PC-9 (cell line): ENCODE measurements at regions of chr12 and their contacts with region 1.

Region 1: DNA sequence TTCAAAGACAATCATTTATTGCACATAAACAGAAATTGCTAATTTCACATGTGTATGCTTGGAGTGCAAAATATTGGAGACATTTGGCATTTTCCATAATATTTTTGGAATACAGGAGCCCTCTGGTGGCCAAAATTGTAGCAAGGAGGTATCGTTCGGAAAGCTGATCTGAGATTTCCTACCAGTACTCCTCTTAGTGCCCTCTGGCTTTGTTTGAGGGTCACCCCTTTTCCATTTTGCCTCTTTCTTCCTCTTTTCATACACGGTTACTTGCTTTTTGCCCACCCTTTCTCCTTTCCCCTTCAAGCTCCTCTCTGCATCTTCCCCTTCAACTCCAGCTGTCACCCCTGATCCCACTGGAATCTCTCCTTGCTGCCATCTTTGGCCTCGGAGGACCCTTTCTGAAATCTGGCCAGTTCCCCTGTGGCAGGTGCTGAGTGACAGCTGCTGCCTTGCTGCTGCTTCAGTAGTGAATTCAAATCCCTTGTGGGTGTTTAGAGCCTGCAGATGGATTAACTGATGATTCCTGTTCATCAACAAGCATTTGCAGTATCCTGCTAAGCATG is 164.6 kb upstream of the PARP11 start:
- DNase-seq: no peak
- H3K4me3 ChIP-seq: no peak overlapping the region
- H3K27ac ChIP-seq: no peak overlapping the region
- H3K4me1 ChIP-seq: no peaks in the 10 kb centered on the region
- H3K27me3 ChIP-seq: peaks cover 46% of the 10 kb centered on the region
- CTCF ChIP-seq: peak; percentile 77

Region 2: DNA sequence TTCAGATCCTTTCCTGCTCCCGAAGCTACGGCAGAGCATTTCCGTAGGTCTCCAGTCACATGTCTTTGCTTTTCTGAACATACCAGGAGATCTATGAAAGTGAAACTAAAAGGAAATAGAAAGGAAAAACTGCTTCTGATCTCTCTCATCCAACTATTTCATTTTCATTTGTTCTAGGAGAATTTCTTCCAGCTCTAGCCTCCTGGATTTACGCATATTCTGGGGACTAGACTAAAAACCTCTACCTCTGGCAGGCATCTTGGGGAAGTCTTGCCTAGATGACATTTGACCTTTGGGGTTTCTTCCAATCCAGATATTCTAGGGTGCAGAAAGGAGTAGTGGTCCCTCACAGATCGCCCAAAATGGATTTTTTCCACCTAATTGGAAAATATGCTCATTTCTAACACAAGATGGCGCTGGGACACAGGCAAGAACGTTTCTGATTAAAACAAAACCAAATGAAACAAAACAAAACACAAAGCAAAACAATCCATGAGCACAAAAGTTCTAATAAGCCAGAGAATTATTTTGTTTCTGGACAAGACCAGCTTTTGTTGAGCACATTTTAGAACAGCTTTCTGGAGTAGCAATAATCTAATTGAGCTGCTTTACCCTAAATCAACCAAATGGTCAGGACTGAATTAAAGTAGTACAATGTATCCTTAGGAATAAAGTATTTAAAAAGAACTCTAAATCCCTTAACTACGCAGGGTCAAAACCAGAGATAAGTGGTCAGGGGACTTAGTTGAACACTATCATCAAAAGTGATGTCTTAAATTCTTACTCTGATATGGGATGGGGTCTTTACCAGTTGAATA is 152.3 kb before region 1 on chr12:
- CTCF ChIA-PET with region 1: interaction called, 4 read pairs
- POLR2A ChIA-PET with region 1: no interaction called
- intact Hi-C with region 1: loop called (anchors 1 kb)
- DNase-seq: peak in 1 of 2 experiments; percentile 10
- H3K4me3 ChIP-seq: no peak overlapping the region
- H3K27ac ChIP-seq: no peak overlapping the region
- H3K4me1 ChIP-seq: no peaks in the 10 kb centered on the region
- H3K27me3 ChIP-seq: peaks cover 38% of the 10 kb centered on the region
- CTCF ChIP-seq: peak; percentile 91

Region 3: DNA sequence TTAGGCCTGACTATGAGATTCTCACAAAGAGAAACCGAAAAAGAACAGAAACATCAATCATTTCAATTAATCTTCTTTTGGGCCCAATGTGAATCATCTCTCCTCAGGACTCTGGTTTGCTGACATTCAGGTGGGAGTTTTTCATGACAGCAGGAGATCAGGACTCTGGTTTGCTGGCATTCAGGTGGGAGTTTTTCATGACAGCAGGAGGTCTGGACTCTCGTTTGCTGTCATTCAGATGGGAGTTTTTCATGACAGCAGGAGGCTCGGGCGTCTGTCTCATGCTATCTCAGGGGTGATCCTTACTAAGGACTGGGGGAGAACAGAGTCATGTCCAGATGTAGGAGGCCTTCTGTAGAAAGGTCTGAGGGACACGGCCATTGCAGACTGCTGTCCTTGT is 124.6 kb before region 1 on chr12:
- CTCF ChIA-PET with region 1: no interaction called
- POLR2A ChIA-PET with region 1: no interaction called
- intact Hi-C with region 1: no loop called
- DNase-seq: no peak
- H3K4me3 ChIP-seq: no peak overlapping the region
- H3K27ac ChIP-seq: no peak overlapping the region
- H3K4me1 ChIP-seq: no peaks in the 10 kb centered on the region
- H3K27me3 ChIP-seq: peaks cover 58% of the 10 kb centered on the region
- CTCF ChIP-seq: no peak